Heart right ventricle (tissue), 16 donors: ENCODE measurements at regions of chr16 and their contacts with region 1.

Region 1: GRCh38 chr16:53282975-53283946 is 151.0 kb upstream of the RBL2 start:
- DNase-seq: no peak
- ATAC-seq: peak in 1 of 8 donors; percentile 27
- H3K4me3 ChIP-seq: no peak overlapping the region
- H3K27ac ChIP-seq: peak overlapping the region in 1 of 10 donors; percentile 21
- H3K4me1 ChIP-seq: peaks cover 0 to 14% (median 6%) of the 10 kb centered on the region in 9 donors
- H3K27me3 ChIP-seq: no peaks in the 10 kb centered on the region
- CTCF ChIP-seq: peak in 7 of 9 donors; percentile 37 to 63 (median 53)

Region 2: GRCh38 chr16:53235851-53236250 is 47.4 kb before region 1 on chr16:
- intact Hi-C with region 1: loop called in 1 of 10 experiments (anchors 5 kb)
- DNase-seq: no peak
- ATAC-seq: no peak
- H3K4me3 ChIP-seq: no peak overlapping the region
- H3K27ac ChIP-seq: no peak overlapping the region
- H3K4me1 ChIP-seq: no peaks in the 10 kb centered on the region
- H3K27me3 ChIP-seq: no peaks in the 10 kb centered on the region
- CTCF ChIP-seq: no peak